Ovary (tissue), 10 donors: ENCODE measurements at regions of chr12 and their contacts with region 1.

Region 1: DNA sequence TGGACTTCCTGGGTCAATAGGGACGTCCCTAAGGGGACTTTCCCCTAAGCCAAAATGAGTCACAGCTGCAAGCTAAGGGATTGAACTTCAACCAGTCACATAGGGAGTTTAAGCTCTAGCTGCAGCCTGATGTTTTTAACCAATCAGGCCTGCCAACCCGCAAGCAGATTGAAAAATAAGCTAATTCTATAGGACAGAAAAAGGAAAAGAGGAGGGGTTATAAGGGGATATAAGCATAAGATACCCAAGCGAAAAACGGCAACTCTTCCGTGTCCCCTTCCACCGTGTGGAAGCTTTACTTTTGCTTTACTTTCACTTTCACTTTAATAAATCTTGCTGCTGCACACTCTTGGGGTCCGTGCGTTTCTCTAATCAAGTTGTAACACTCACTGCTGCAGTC is 24.4 kb downstream of the ATP23 start:
- DNase-seq: no peak
- H3K4me3 ChIP-seq: no peak overlapping the region
- H3K27ac ChIP-seq: no peak overlapping the region
- H3K4me1 ChIP-seq: no peaks in the 10 kb centered on the region
- H3K27me3 ChIP-seq: no peaks in the 10 kb centered on the region
- CTCF ChIP-seq: no peak
- EP300 ChIP-seq: no peak
- POLR2A ChIP-seq: no peak

Region 2: GRCh38 chr12:57726151-57726883 is 239.4 kb before region 1 on chr12:
- intact Hi-C with region 1: no loop called
- DNase-seq: peak; percentile 75 to 86 (median 85)
- H3K4me3 ChIP-seq: peak overlapping the region; percentile 58
- H3K27ac ChIP-seq: no peak overlapping the region
- H3K4me1 ChIP-seq: peaks cover 7% of the 10 kb centered on the region
- H3K27me3 ChIP-seq: no peaks in the 10 kb centered on the region
- CTCF ChIP-seq: peak; percentile 43 to 73 (median 59)
- EP300 ChIP-seq: no peak
- POLR2A ChIP-seq: no peak

Region 3: GRCh38 chr12:57888409-57889157 is 77.2 kb before region 1 on chr12:
- intact Hi-C with region 1: no loop called
- DNase-seq: peak; percentile 41 to 67 (median 58)
- H3K4me3 ChIP-seq: no peak overlapping the region
- H3K27ac ChIP-seq: peak overlapping the region; percentile 86 to 100
- H3K4me1 ChIP-seq: peaks cover 44% of the 10 kb centered on the region
- H3K27me3 ChIP-seq: no peaks in the 10 kb centered on the region
- CTCF ChIP-seq: no peak
- EP300 ChIP-seq: no peak
- POLR2A ChIP-seq: no peak

Region 4: DNA sequence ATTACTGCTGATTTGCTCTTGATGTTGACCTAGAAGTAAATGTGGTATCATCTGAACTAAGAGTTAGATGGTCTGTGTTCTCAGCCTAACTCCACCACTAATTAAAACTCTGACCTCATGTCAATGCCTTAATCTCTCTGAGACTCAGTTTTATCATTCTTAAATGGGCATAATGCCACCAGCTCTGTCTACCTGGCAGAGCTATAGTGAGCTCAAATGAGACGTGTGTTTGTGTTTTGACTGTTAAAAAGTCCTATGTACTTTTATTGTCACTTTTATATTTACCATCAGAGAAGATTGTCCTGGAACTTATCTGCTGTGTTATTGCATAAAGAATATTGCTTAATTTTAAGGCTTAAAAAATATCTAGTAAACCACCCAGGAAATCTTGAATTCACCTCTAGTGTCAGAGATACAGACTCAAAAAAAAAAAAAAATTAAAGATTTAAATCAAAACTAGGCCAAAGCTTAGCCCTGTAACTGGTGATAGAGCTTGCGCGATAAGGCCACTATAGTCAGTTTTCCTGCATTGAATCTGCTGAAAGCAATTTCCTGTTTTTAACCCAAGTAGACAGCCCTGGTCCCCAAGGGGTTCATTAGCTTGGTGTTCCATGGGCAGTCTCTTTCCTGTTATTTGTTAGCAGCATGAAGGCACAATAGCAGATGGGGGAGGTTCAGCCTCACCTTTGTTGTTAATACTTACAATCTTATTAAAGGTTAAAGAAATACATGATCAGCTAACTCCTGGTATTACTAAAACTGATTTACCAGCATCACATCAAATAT is 237.4 kb after region 1 on chr12:
- intact Hi-C with region 1: no loop called
- DNase-seq: no peak
- H3K4me3 ChIP-seq: no peak overlapping the region
- H3K27ac ChIP-seq: no peak overlapping the region
- H3K4me1 ChIP-seq: no peaks in the 10 kb centered on the region
- H3K27me3 ChIP-seq: no peaks in the 10 kb centered on the region
- CTCF ChIP-seq: no peak
- EP300 ChIP-seq: no peak
- POLR2A ChIP-seq: no peak

Region 5: GRCh38 chr12:58939399-58940100 is 973.8 kb after region 1 on chr12:
- intact Hi-C with region 1: loop called in 1 of 4 experiments (anchors 5 kb)
- DNase-seq: no peak
- H3K4me3 ChIP-seq: no peak overlapping the region
- H3K27ac ChIP-seq: no peak overlapping the region
- H3K4me1 ChIP-seq: no peaks in the 10 kb centered on the region
- H3K27me3 ChIP-seq: no peaks in the 10 kb centered on the region
- CTCF ChIP-seq: no peak
- EP300 ChIP-seq: no peak
- POLR2A ChIP-seq: no peak